ENCODE measurements at regions of chr3 and their contacts with region 1.

Region 1: DNA sequence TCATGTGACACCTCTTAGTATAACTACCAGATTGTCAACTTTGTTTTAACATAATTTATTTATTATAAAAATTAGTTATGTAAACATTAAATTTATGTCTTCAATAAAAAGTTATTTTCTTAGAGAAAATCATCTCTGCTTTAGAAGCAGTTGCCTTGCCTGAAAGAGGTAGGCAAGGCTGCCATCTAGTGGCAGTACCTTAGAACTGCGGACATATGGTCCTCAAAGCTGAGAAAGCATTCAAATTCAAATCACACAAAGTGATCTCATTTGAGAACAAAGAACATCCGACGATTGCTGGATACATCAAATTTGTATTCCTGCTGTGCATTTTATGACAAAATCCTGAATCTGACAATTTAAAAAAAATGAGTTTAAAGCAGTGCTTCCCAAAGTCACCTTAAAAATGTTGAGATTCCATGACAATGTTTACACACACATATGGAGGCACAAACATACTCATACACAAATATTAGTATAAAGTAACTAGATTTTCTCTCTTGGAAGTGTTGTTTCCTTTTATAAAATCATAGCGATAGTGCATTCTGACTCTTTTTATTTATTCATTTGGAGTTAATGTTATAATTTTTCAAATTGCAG is 617.4 kb downstream of the CADM2 start:
- DNase-seq: peak; percentile 39
- ATAC-seq: no peak

Region 2: GRCh38 chr3:84547971-84548970 is 1027.9 kb before region 1 on chr3:
- intact Hi-C with region 1: loop called (anchors 10 kb)
- DNase-seq: peak; percentile 22
- ATAC-seq: peak; percentile 72

Region 3: GRCh38 chr3:85360742-85361387 is 215.3 kb before region 1 on chr3:
- intact Hi-C with region 1: no loop called
- DNase-seq: peak; percentile 19
- ATAC-seq: peak; percentile 31

Measured in left ventricle myocardium superior (tissue), 1 donor.